ENCODE measurements at regions of chr20 and their contacts with region 1.

Region 1: GRCh38 chr20:46757754-46758678 is 48.6 kb downstream of the SLC2A10 start:
- DNase-seq: no peak
- H3K4me3 ChIP-seq: no peak overlapping the region
- H3K27ac ChIP-seq: no peak overlapping the region
- H3K27me3 ChIP-seq: no peaks in the 10 kb centered on the region
- CTCF ChIP-seq: peak; percentile 99

Region 2: GRCh38 chr20:46914789-46915379 is 156.9 kb after region 1 on chr20:
- CTCF ChIA-PET with region 1: interaction called, 12 read pairs
- POLR2A ChIA-PET with region 1: no interaction called
- DNase-seq: no peak
- H3K4me3 ChIP-seq: no peak overlapping the region
- H3K27ac ChIP-seq: no peak overlapping the region
- H3K27me3 ChIP-seq: no peaks in the 10 kb centered on the region
- CTCF ChIP-seq: no peak

Measured in AG04450 (cell line).